ENCODE measurements at regions of chr11 and their contacts with region 1.

Region 1: DNA sequence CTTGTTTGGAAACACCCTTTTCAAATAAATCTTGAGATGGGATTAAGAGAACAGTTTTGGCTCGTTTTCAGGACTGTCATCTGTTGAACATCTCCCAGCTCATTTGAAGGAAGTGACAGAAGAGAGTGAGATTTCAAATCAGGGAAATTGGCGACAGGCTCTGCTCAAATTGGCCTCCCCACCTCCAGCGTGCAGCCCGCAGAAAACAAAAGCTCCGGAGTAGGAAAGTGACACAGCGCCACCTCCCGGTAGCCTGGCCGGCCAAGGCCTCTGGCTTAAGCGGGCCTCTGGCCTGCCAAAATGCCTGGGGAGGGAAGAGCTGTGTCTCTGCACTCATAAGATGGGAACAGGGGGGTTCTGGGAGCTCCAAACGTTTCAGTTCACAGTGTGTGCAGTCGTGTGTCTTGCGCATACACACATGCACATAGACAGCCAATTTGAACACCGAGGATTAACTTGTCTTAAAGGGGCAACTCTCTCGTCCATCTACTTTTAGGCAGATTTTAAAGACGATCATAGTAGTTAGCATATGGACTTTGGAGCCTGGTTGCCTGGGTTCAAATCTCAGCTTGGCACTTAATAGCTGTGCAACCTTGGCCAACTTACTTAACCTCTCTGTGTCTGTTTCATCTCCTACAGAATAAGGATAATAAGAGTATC is 132.7 kb upstream of the RCN1 start:
- DNase-seq: peak; percentile 79
- CTCF ChIP-seq: peak; percentile 85

Region 2: GRCh38 chr11:31240338-31240904 is 717.8 kb before region 1 on chr11:
- in situ Hi-C with region 1: loop called (anchors 25 kb)
- DNase-seq: no peak
- CTCF ChIP-seq: peak; percentile 42

Region 3: DNA sequence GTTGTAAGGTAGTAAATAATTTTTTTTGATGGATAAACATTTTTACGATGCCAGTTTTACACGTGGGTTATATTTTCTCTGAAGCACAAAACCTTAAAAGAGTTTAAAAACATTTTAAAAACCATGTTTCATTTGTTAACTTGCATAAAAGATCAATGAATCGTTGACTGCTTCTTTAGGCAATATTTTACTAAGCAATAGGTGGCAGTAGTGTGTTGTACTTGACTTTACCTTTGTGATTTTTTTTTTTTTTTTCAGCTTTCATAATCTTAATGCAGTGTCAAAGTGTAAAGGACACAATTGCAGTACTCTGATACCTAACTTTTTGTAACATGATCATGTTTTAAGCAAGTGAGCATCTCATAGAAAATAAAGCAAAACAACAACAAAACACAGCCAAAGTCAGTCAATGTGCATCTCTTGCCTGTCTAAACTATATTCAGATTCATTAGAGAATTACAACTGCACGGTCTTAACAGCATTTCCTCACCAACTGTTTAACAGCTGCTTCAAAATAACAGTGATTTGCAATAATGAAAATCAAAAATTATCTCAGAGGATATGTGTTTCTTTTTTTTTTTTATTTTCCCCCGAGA is 560.9 kb before region 1 on chr11:
- in situ Hi-C with region 1: loop called (anchors 10 kb)
- DNase-seq: peak; percentile 31
- CTCF ChIP-seq: peak; percentile 23

Region 4: GRCh38 chr11:31487848-31488247 is 470.4 kb before region 1 on chr11:
- in situ Hi-C with region 1: loop called (anchors 25 kb)
- DNase-seq: no peak
- CTCF ChIP-seq: no peak

Region 5: GRCh38 chr11:31725176-31725575 is 233.0 kb before region 1 on chr11:
- in situ Hi-C with region 1: no loop called
- DNase-seq: no peak
- CTCF ChIP-seq: no peak

Measured in GM13976 (cell line).